AG04449 (cell line): ENCODE measurements at regions of chr3 and their contacts with region 1.

Region 1: GRCh38 chr3:151327571-151328198 is 1.7 kb downstream of the P2RY13 start:
- DNase-seq: no peak
- H3K4me3 ChIP-seq: no peak overlapping the region
- CTCF ChIP-seq: peak; percentile 28

Region 2: GRCh38 chr3:151290673-151291072 is 37.0 kb before region 1 on chr3:
- CTCF ChIA-PET with region 1: interaction called, 51 read pairs
- POLR2A ChIA-PET with region 1: no interaction called
- DNase-seq: no peak
- H3K4me3 ChIP-seq: no peak overlapping the region
- CTCF ChIP-seq: peak; percentile 28

Region 3: DNA sequence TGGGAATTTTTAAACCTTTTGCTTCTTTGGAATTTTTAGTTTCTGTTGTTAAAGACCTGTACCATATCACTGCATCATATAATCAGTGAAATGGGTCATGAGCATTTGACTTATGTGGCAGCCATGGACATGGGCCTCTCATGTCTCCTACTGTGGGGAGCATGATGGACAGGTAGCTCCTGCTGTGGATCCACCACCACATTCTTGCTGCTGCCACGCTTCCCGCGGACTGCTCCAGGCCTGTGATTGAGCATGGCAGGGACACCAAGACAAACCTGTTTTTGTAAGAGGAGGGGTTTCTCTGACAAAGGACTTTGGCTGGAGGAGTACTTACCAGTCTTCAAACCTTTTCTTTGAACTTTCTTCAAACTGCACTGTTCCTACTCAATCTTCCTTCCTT is 31.5 kb before region 1 on chr3:
- CTCF ChIA-PET with region 1: interaction called, 51 read pairs
- POLR2A ChIA-PET with region 1: no interaction called
- DNase-seq: no peak
- H3K4me3 ChIP-seq: no peak overlapping the region
- CTCF ChIP-seq: no peak

Region 4: DNA sequence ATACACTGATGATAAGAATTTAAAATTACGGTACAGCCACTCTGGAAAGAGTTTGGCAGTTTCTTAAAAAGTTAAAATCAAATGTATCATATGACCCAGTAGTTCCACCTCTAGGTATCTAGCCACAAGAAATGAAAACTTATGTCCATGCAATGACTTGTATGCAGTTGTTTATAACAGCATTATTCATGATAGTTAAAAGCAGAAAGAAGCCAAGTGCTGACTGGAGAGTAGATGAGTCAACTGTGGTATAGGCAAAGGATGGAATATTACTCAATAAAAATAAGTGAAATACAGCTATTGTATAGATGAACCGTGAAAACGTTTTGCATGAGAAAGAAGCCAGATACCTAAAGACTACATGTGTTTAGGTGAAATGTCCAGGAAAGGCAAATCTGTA is 25.9 kb before region 1 on chr3:
- CTCF ChIA-PET with region 1: interaction called, 22 read pairs
- POLR2A ChIA-PET with region 1: no interaction called
- DNase-seq: no peak
- H3K4me3 ChIP-seq: no peak overlapping the region
- CTCF ChIP-seq: no peak

Region 5: GRCh38 chr3:151316267-151316991 is 11.3 kb before region 1 on chr3 and contains the start of gene GPR87:
- CTCF ChIA-PET with region 1: interaction called, 94 read pairs
- POLR2A ChIA-PET with region 1: no interaction called
- DNase-seq: no peak
- H3K4me3 ChIP-seq: no peak within 1 kb of the TSS
- CTCF ChIP-seq: no peak

Region 6: DNA sequence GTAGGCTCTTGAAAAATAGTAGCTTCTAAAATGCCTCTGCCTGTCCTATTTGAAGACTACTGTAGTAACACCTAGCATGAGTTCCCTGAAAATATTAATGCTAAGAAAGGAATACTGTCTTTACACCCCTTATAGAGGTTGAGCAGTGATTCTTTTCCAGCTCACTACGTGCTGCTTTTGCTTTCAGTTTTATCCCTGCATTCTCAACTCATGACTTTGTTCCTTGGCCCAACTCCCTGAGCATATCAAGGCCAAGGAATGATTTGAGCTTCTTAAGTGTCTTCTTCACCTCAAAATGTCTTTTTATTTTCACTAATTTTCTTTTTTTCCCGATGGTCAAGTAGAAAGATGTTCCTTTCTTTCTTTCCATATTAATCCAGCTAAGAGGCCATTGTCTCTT is 18.2 kb after region 1 on chr3:
- CTCF ChIA-PET with region 1: interaction called, 17 read pairs
- POLR2A ChIA-PET with region 1: no interaction called
- DNase-seq: peak; percentile 53
- H3K4me3 ChIP-seq: no peak overlapping the region
- CTCF ChIP-seq: no peak